Activated B cell treated with CpG ODN at 0.5 μM for 24 hours (primary cell): ENCODE measurements at regions of chr4 and their contacts with region 1.

Region 1: DNA sequence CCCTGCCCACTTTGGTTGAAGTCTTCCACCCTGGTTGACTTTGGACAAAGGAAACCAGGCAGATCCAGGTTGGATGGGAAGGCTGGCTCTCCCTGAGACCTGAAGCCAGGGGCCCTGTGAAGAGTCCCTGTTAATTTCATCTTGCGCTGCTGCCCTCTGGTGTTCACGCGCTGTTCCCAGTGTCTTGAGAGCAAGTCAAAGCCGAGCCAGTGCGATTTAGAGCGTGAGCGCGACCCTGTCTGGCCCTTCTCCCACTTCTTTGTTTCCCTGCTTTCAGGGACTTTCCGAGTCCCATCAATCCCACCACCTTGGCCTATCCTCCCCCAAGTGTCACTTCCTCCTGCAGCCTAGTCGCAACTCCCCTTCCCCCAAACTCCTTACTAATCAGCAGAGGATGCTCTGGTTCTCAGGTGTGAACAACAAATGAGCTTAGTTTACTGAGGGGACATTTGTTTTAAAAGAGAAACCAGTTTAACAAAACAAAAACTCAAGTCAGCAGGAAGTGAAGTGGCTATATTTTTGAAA is 25.8 kb upstream of the CHRNA9 start:
- DNase-seq: peak; percentile 78
- ATAC-seq: peak; percentile 20
- H3K4me3 Mint-ChIP-seq: peak overlapping the region; percentile 60
- H3K27ac Mint-ChIP-seq: peak overlapping the region; percentile 92
- H3K4me1 Mint-ChIP-seq: peaks cover 74% of the 10 kb centered on the region
- H3K27me3 Mint-ChIP-seq: no peaks in the 10 kb centered on the region
- CTCF ChIP-seq: no peak

Region 2: GRCh38 chr4:39697740-39698423 is 611.4 kb before region 1 on chr4 and contains the start of gene UBE2K:
- CTCF ChIA-PET with region 1: no interaction called
- POLR2A ChIA-PET with region 1: no interaction called
- intact Hi-C with region 1: loop called (anchors 5 kb)
- DNase-seq: peak; percentile 93
- ATAC-seq: peak; percentile 89
- H3K4me3 Mint-ChIP-seq: peak within 1 kb of the TSS; percentile 99
- H3K27ac Mint-ChIP-seq: peak within 1 kb of the TSS; percentile 96
- H3K4me1 Mint-ChIP-seq: peaks cover 48% of the 10 kb centered on the region
- H3K27me3 Mint-ChIP-seq: no peaks in the 10 kb centered on the region
- CTCF ChIP-seq: no peak
- total RNA-seq, gene UBE2K: 54.4 and 64.0 TPM in 2 replicates

Region 3: GRCh38 chr4:40173470-40173875 is 135.8 kb before region 1 on chr4:
- CTCF ChIA-PET with region 1: interaction called, 5 read pairs
- POLR2A ChIA-PET with region 1: interaction called, 5 read pairs
- intact Hi-C with region 1: loop called (anchors 1 kb)
- DNase-seq: no peak
- ATAC-seq: peak; percentile 83
- H3K4me3 Mint-ChIP-seq: peak overlapping the region; percentile 69
- H3K27ac Mint-ChIP-seq: peak overlapping the region; percentile 81
- H3K4me1 Mint-ChIP-seq: peaks cover 59% of the 10 kb centered on the region
- H3K27me3 Mint-ChIP-seq: no peaks in the 10 kb centered on the region
- CTCF ChIP-seq: no peak

Region 4: DNA sequence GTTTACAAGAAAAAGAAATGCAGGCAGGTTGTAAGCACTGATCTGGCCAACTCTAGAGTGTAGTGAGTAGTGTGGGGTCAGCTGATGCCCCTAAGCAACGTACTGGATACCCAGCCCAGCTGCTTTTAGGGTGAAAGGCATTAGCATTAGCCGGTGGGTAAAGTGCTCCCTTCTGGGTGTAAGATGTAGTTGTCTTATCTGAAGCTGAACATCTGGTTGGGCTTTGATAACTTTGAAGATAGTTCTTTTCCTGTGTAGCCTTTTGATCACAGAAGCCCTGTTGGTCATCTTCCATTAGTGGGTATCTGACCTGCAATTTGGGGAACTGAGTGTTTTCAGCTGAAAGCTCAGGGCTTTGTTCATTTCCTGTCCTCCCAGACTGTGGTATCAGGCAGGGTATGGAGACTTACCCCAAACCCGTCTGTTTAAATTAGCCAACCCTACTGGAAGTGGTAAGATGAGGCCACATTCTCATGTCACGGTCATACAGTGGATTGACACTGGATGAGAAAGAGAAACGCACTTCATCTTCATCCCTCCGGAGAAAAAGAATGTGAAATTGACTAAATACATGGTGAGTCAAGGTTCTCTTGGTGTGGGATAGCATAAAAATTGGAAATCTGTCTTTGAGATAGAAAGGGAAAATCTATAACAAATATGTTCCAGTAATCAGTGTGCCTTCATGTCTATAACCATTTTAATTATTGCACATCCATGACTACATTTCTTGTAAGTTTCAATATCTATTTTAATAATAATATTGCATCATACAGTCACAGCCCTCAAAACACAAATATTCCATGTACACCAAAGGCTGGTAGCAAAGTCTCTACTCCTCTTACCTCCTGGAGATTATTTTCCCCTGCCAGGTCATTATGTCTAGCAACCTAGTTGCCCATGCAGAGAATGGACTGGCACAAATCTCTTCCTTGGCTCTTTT is 103.8 kb before region 1 on chr4:
- CTCF ChIA-PET with region 1: interaction called, 13 read pairs
- POLR2A ChIA-PET with region 1: interaction called, 187 read pairs
- intact Hi-C with region 1: loop called (anchors 1 kb)
- DNase-seq: no peak
- ATAC-seq: peak; percentile 51
- H3K4me3 Mint-ChIP-seq: peak overlapping the region; percentile 71
- H3K27ac Mint-ChIP-seq: peak overlapping the region; percentile 92
- H3K4me1 Mint-ChIP-seq: peaks cover 92% of the 10 kb centered on the region
- H3K27me3 Mint-ChIP-seq: no peaks in the 10 kb centered on the region
- CTCF ChIP-seq: no peak

Region 5: DNA sequence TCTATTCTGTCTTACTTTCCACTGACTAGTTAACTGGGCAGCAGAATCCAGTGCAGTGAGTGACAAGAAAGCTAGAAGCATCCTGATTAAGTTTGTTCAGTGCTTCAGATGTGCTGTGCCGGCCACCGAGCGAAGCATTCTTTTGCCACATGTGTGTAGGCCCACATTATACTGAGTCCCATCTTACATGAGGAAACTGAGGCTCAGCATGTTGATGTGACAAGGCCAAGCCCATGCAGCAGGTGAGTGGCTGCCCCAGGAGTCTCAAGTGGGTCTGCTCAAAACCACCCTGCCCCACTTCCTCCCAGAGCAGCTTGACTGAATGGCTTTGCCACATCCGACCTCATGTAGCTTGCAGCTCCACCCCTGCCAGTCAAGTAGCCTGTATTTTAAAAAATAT is 62.0 kb before region 1 on chr4:
- CTCF ChIA-PET with region 1: interaction called, 8 read pairs
- POLR2A ChIA-PET with region 1: interaction called, 16 read pairs
- intact Hi-C with region 1: loop called (anchors 1 kb)
- DNase-seq: no peak
- ATAC-seq: peak; percentile 78
- H3K4me3 Mint-ChIP-seq: no peak overlapping the region
- H3K27ac Mint-ChIP-seq: peak overlapping the region; percentile 74
- H3K4me1 Mint-ChIP-seq: peaks cover 68% of the 10 kb centered on the region
- H3K27me3 Mint-ChIP-seq: no peaks in the 10 kb centered on the region
- CTCF ChIP-seq: no peak

Region 6: GRCh38 chr4:40325189-40326019 is 16.1 kb after region 1 on chr4:
- CTCF ChIA-PET with region 1: interaction called, 29 read pairs
- POLR2A ChIA-PET with region 1: no interaction called
- intact Hi-C with region 1: loop called (anchors 1 kb)
- DNase-seq: no peak
- ATAC-seq: peak; percentile 100
- H3K4me3 Mint-ChIP-seq: no peak overlapping the region
- H3K27ac Mint-ChIP-seq: no peak overlapping the region
- H3K4me1 Mint-ChIP-seq: peaks cover 14% of the 10 kb centered on the region
- H3K27me3 Mint-ChIP-seq: peaks cover 5% of the 10 kb centered on the region
- CTCF ChIP-seq: no peak

Region 7: GRCh38 chr4:40550948-40551462 is 241.7 kb after region 1 on chr4:
- CTCF ChIA-PET with region 1: no interaction called
- POLR2A ChIA-PET with region 1: no interaction called
- intact Hi-C with region 1: no loop called
- DNase-seq: no peak
- ATAC-seq: peak; percentile 78
- H3K4me3 Mint-ChIP-seq: peak overlapping the region; percentile 81
- H3K27ac Mint-ChIP-seq: peak overlapping the region; percentile 83
- H3K4me1 Mint-ChIP-seq: peaks cover 42% of the 10 kb centered on the region
- H3K27me3 Mint-ChIP-seq: no peaks in the 10 kb centered on the region
- CTCF ChIP-seq: no peak